ENCODE measurements at regions of chr3 and their contacts with region 1.

Region 1: DNA sequence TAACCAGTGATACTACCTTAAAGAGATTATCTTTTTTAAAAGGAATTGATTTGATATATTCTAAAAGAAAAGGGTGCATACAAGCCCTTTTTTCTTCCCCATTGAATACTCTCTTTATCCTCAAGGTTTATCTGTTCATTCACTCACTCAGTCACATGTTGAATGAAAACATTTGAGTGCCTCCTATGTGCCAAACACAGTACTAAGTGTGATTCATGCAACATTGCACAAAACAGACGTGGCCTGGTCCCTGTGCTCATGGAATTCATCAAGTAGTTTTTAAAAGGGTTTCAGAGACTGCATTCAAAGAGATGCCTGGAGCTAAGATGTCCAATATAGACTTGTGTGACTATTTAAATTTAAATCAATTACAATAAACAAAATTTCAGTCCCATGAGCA is 462.2 kb upstream of the MDFIC2 start:
- DNase-seq: no peak
- H3K4me3 ChIP-seq: no peak overlapping the region
- H3K27ac ChIP-seq: no peak overlapping the region
- H3K4me1 ChIP-seq: peaks cover 23% of the 10 kb centered on the region
- H3K27me3 ChIP-seq: no peaks in the 10 kb centered on the region
- CTCF ChIP-seq: no peak
- POLR2A ChIP-seq: no peak

Region 2: GRCh38 chr3:70726961-70727360 is 47.7 kb before region 1 on chr3:
- CTCF ChIA-PET with region 1: no interaction called
- POLR2A ChIA-PET with region 1: no interaction called
- dilution Hi-C with region 1: no loop called
- intact Hi-C with region 1: loop called (anchors 5 kb)
- DNase-seq: no peak
- H3K4me3 ChIP-seq: no peak overlapping the region
- H3K27ac ChIP-seq: no peak overlapping the region
- H3K4me1 ChIP-seq: no peaks in the 10 kb centered on the region
- H3K27me3 ChIP-seq: no peaks in the 10 kb centered on the region
- CTCF ChIP-seq: no peak
- POLR2A ChIP-seq: no peak

Region 3: DNA sequence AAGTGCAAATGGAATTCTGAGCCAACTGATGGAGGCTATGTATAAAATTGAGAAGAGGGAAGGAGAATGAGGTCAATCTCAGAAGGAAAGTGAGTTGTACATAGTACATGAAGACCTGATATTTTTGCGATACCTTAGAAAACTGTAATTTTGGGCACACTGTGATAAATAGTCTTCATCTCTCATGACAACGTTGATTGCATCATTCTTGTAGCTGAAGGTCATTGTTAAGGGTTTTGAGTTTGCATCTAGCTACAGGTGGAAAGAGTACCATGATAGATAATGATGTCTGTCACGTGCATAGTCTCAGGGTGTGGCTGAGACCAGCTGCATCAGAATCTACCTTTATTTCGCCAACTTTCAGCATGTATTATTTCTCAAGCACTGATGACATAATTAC is 26.8 kb before region 1 on chr3:
- CTCF ChIA-PET with region 1: no interaction called
- POLR2A ChIA-PET with region 1: no interaction called
- dilution Hi-C with region 1: no loop called
- intact Hi-C with region 1: no loop called
- DNase-seq: no peak
- H3K4me3 ChIP-seq: no peak overlapping the region
- H3K27ac ChIP-seq: no peak overlapping the region
- H3K4me1 ChIP-seq: no peaks in the 10 kb centered on the region
- H3K27me3 ChIP-seq: no peaks in the 10 kb centered on the region
- CTCF ChIP-seq: no peak
- POLR2A ChIP-seq: no peak

Region 4: DNA sequence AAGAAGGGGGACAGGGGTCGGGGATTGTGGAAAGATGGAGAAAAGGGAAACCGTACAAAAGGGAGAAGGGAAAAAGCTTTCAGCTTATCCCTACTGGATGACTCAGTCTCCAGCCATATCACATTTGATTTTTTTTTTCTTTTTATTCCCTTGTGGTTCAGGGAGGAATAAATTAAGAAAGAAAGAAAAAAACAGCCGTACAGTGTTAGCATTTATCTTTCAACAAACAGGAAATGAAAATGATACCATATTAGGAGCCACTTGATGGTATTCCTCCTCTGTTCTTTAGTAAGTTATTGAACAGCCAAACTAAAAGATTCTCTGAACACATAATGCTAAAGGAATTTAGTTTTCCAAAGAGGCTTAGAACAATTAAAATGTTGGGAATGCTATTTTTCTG is 214.5 kb after region 1 on chr3:
- CTCF ChIA-PET with region 1: no interaction called
- POLR2A ChIA-PET with region 1: no interaction called
- dilution Hi-C with region 1: no loop called
- intact Hi-C with region 1: loop called (anchors 5 kb)
- DNase-seq: peak; percentile 62
- H3K4me3 ChIP-seq: no peak overlapping the region
- H3K27ac ChIP-seq: peak overlapping the region; percentile 33
- H3K4me1 ChIP-seq: peaks cover 22% of the 10 kb centered on the region
- H3K27me3 ChIP-seq: no peaks in the 10 kb centered on the region
- CTCF ChIP-seq: no peak
- POLR2A ChIP-seq: no peak

Region 5: GRCh38 chr3:71466483-71466882 is 691.8 kb after region 1 on chr3:
- CTCF ChIA-PET with region 1: no interaction called
- POLR2A ChIA-PET with region 1: no interaction called
- dilution Hi-C with region 1: no loop called
- intact Hi-C with region 1: no loop called
- DNase-seq: peak; percentile 89
- H3K4me3 ChIP-seq: peak overlapping the region in 1 of 3 experiments; percentile 9
- H3K27ac ChIP-seq: no peak overlapping the region
- H3K4me1 ChIP-seq: peaks cover 16% of the 10 kb centered on the region
- H3K27me3 ChIP-seq: no peaks in the 10 kb centered on the region
- CTCF ChIP-seq: no peak
- POLR2A ChIP-seq: no peak

Measured in endothelial cell of umbilical vein (primary cell).